Left colon (tissue), 2 donors: ENCODE measurements at regions of chr12 and their contacts with region 1.

Region 1: GRCh38 chr12:46382964-46383653 is 10.5 kb upstream of the SLC38A2 start:
- DNase-seq: peak; percentile 97
- ATAC-seq: peak; percentile 89

Region 2: GRCh38 chr12:46269559-46270241 is 113.4 kb before region 1 on chr12:
- intact Hi-C with region 1: no loop called
- DNase-seq: peak; percentile 65
- ATAC-seq: peak; percentile 24

Region 3: GRCh38 chr12:46473634-46474329 is 90.7 kb after region 1 on chr12:
- intact Hi-C with region 1: loop called in 1 of 2 experiments (anchors 10 kb)
- DNase-seq: peak; percentile 57 to 83
- ATAC-seq: peak; percentile 97

Region 4: GRCh38 chr12:46507766-46508165 is 124.7 kb after region 1 on chr12:
- intact Hi-C with region 1: no loop called
- DNase-seq: no peak
- ATAC-seq: no peak